Heart left ventricle (tissue), 16 donors: ENCODE measurements at regions of chr6 and their contacts with region 1.

Region 1: DNA sequence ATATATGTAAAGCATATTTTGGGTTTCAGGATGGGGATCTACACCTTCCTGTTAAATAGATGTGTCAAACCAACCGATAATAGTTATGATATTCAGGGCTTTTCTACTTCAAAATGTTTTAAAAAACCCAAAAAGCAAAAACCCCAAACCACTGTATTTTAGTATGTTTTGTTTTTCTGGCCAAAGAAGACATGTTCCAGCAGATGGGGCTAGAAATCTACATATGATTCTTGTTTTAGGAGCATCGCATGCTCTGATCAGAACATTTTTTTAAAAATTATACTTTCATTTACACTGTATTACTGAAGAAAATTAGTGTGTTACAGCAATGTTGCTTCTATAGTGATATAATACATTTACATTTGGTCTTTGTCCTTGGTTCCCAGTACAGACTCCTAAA is 11.0 kb downstream of the RMND1 start:
- DNase-seq: no peak
- ATAC-seq: no peak
- H3K4me3 ChIP-seq: peak overlapping the region in 1 of 12 donors; percentile 20
- H3K27ac ChIP-seq: peak overlapping the region in 6 of 12 donors; percentile 1 to 40 (median 10)
- H3K4me1 ChIP-seq: peaks cover 0 to 52% (median 37%) of the 10 kb centered on the region in 12 donors
- H3K27me3 ChIP-seq: no peaks in the 10 kb centered on the region
- CTCF ChIP-seq: peak in 11 of 12 donors; percentile 11 to 61 (median 44)
- POLR2A ChIP-seq: no peak

Region 2: DNA sequence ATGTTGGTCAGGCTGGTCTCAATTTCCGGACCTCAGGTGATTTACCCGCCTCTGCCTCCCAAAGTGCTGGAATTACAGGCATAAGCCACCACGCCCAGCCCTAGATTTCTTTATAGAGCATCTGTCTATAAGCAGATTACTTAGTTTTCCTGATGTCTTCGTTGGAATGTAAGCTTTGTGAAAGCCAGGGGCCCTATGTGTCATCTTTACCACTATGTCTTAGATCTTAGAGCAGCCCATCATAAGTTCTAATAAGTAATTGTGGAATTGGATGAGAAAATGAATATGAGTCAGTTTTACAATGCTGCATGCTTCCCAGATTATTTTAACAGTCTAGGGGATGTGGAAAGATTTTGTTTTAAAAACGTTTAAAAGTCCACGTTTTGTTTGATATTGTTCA is 40.5 kb before region 1 on chr6:
- intact Hi-C with region 1: loop called in 2 of 10 experiments (anchors 5 to 10 kb)
- DNase-seq: no peak
- ATAC-seq: no peak
- H3K4me3 ChIP-seq: no peak overlapping the region
- H3K27ac ChIP-seq: no peak overlapping the region
- H3K4me1 ChIP-seq: peaks cover 0 to 50% (median 19%) of the 10 kb centered on the region in 12 donors
- H3K27me3 ChIP-seq: no peaks in the 10 kb centered on the region
- CTCF ChIP-seq: no peak
- POLR2A ChIP-seq: no peak